Lower leg skin (tissue), 4 donors: ENCODE measurements at regions of chr6 and their contacts with region 1.

Region 1: DNA sequence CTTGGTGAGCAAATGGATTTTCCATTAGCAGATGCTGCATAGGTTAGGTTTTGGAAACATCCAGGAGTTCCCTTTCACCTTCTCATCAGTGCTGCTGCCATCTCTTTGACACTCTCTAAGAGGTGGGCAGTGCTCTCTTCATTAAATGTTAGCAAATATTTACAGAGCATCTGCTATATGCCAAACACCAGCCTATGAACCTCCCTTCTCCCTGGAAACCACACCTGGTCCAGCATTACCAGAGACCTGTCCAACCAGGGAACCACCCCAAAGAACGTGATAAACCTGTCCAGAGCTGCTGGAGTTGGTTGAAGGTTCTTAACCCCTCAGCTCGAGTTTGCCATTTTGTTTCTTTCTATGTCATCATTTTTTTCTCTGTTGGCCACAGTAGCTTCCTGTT is 22.1 kb upstream of the SCGN start:
- DNase-seq: no peak
- H3K4me3 ChIP-seq: no peak overlapping the region
- CTCF ChIP-seq: no peak
- POLR2A ChIP-seq: no peak

Region 2: GRCh38 chr6:25669413-25669812 is 39.5 kb after region 1 on chr6:
- intact Hi-C with region 1: loop called (anchors 5 kb)
- DNase-seq: no peak
- H3K4me3 ChIP-seq: no peak overlapping the region
- CTCF ChIP-seq: no peak
- POLR2A ChIP-seq: no peak